Right lobe of liver (tissue), 6 donors: ENCODE measurements at regions of chrX and their contacts with region 1.

Region 1: GRCh38 chrX:138745196-138745595 is 33.7 kb upstream of the FGF13 start:
- DNase-seq: no peak
- ATAC-seq: peak; percentile 58 to 92 (median 82)
- H3K4me3 ChIP-seq: no peak overlapping the region
- H3K27ac ChIP-seq: no peak overlapping the region
- H3K4me1 ChIP-seq: no peaks in the 10 kb centered on the region
- H3K27me3 ChIP-seq: peaks cover 0 to 6% of the 10 kb centered on the region in 2 donors
- CTCF ChIP-seq: peak; percentile 73 to 85 (median 80)
- POLR2A ChIP-seq: no peak

Region 2: GRCh38 chrX:138191998-138192397 is 553.2 kb before region 1 on chrX:
- intact Hi-C with region 1: loop called in 1 of 2 experiments (anchors 10 kb)
- DNase-seq: no peak
- ATAC-seq: peak in 2 of 4 donors; percentile 30 to 41
- H3K4me3 ChIP-seq: no peak overlapping the region
- H3K27ac ChIP-seq: no peak overlapping the region
- H3K4me1 ChIP-seq: no peaks in the 10 kb centered on the region
- H3K27me3 ChIP-seq: no peaks in the 10 kb centered on the region
- CTCF ChIP-seq: peak; percentile 48 to 65 (median 52)
- POLR2A ChIP-seq: no peak